K562 (cell line): ENCODE measurements at regions of chr9 and their contacts with region 1.

Region 1: GRCh38 chr9:123091459-123091858 is 58.0 kb downstream of the GPR21 start:
- DNase-seq: no peak
- ATAC-seq: no peak
- H3K4me3 ChIP-seq: no peak overlapping the region
- H3K27ac ChIP-seq: no peak overlapping the region
- H3K4me1 ChIP-seq: no peaks in the 10 kb centered on the region; a peak in 1 of 5 replicates
- H3K27me3 ChIP-seq: no peaks in the 10 kb centered on the region
- CTCF ChIP-seq: peak in 1 of 3 experiments; percentile 25; a peak in 2 of 6 replicates
- EP300 ChIP-seq: no peak
- POLR2A ChIP-seq: no peak
- RAD21 ChIP-seq: no peak

Region 2: DNA sequence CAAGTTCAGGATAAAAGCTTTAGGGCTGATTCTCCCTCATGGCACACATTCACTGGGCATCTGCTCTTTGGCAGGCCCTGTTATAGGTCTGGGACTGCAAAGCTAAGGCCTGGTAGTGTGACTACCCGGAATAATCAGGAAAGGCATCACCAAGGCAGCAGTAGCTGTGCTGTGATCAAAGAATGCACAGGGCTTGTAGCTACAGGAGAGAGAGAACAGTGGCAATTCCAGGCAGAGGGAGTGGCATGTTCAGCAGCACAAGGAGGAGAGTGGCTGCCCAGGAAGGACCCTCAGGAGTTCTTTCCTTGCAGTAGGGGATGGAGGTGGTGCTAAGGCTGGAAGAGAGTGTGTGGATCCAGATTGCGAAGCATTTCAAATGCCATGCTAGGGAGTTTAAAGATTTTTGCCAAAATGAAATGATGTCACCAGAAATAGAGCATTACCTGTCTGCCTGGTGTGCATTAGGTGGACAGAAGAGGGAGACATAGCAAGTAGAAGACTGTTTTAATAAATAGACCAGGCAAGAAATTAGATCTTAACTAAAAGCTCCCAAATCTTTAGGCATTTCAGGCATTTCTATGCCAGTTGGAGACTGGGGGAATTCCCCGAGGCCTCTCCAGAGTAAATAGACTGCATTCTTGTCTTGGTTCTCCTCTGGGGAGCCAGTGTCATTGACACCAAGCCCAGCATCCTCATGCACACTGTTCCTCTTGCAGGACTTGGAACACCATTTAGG is 11.1 kb after region 1 on chr9:
- CTCF ChIA-PET with region 1: no interaction called
- POLR2A ChIA-PET with region 1: interaction called, 11 read pairs
- in situ Hi-C with region 1: no loop called
- intact Hi-C with region 1: no loop called
- DNase-seq: no peak
- ATAC-seq: peak; percentile 48
- H3K4me3 ChIP-seq: no peak overlapping the region
- H3K27ac ChIP-seq: no peak overlapping the region
- H3K4me1 ChIP-seq: no peaks in the 10 kb centered on the region
- H3K27me3 ChIP-seq: no peaks in the 10 kb centered on the region
- CTCF ChIP-seq: peak; percentile 19 to 44 (median 33); a peak in 4 of 6 replicates
- EP300 ChIP-seq: no peak
- POLR2A ChIP-seq: no peak
- RAD21 ChIP-seq: peak in 1 of 2 experiments; percentile 44; a peak in 2 of 4 replicates